ENCODE measurements at regions of chr9 and their contacts with region 1.

Region 1: GRCh38 chr9:27086818-27087680 is 22.0 kb upstream of the TEK start:
- DNase-seq: no peak
- H3K4me3 ChIP-seq: no peak overlapping the region
- CTCF ChIP-seq: no peak
- POLR2A ChIP-seq: no peak

Region 2: DNA sequence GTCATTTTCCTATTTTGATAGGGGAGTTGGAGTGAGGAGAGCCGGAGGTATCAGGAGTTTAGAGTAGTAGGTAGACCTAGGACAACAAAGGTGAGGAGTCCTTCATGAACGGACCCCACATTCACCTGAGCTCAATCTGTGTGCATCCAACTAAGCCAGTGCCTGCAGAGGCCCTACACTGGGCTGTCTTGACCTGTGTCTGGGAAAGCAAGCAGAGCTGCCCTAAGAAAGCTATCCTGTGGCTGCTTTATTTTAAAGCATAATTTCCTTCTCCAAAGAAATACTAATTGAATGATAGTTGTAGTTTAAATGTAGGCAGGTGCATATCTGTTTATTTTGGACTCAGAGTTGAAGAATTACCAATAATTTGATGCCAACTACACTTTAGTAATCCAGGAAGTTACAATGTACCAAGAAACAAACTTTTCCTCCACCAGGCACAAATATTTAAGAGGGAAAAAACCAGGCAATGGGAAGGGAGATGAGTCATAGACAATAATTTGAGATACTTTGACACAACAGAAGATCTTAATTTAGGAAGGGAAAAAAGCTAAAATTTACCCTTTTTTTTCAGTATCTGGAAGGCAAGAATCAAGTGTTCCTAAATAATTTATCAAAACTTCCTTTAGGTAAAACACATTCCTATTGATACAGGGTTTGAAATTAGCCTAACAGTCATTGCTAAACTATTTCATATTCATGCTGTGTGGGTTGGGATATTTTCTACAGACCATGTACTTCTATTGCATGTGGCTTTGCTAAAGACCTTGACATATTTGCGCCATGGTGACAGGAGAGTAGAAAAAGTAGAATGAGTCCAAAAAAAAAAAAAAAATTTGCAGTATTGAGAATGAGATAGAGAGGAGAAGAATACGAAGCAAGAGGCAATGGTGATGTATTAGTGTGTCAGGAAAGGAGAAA is 1032.2 kb before region 1 on chr9:
- intact Hi-C with region 1: no loop called
- DNase-seq: no peak
- H3K4me3 ChIP-seq: no peak overlapping the region
- CTCF ChIP-seq: no peak
- POLR2A ChIP-seq: no peak

Region 3: GRCh38 chr9:27125030-27125429 is 38.0 kb after region 1 on chr9:
- intact Hi-C with region 1: loop called (anchors 2 kb)
- DNase-seq: peak in 1 of 2 donors; percentile 37
- H3K4me3 ChIP-seq: no peak overlapping the region
- CTCF ChIP-seq: no peak
- POLR2A ChIP-seq: no peak